ENCODE measurements at regions of chr12 and their contacts with region 1.

Region 1: GRCh38 chr12:93397412-93397811 is 19.7 kb downstream of the NUDT4 start:
- DNase-seq: no peak
- H3K4me3 ChIP-seq: no peak overlapping the region
- H3K4me3 Mint-ChIP-seq: no peak overlapping the region
- H3K27ac ChIP-seq: no peak overlapping the region
- H3K27ac Mint-ChIP-seq: no peak overlapping the region
- H3K4me1 ChIP-seq: no peaks in the 10 kb centered on the region
- H3K4me1 Mint-ChIP-seq: peaks cover 0 to 5% (median 4%) of the 10 kb centered on the region in 3 donors
- H3K27me3 ChIP-seq: no peaks in the 10 kb centered on the region
- H3K27me3 Mint-ChIP-seq: no peaks in the 10 kb centered on the region

Region 2: DNA sequence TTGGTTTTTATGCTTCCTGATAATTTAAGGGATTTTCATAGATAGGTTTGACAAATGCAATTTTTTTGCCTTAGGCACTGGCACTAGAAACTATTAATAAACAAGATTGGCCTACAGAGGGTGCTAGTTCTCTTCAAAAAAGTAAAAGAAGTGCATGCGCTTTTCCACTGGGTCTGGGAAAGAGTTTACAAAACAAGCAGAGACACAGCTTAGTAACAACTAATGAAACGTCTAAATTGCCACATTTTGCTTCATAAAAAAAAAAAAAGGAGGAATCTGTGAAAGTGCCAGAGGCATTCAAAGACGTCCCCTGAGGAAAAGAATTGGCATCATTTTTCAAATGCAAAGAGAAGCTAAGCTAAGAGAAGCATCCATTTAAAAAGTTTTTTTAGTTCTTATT is 410.1 kb before region 1 on chr12:
- CTCF ChIA-PET with region 1: interaction called, 28 read pairs
- POLR2A ChIA-PET with region 1: no interaction called
- DNase-seq: peak in 2 of 5 donors; percentile 41 to 51
- H3K4me3 ChIP-seq: no peak overlapping the region
- H3K4me3 Mint-ChIP-seq: peak overlapping the region in 1 of 7 donors; percentile 51
- H3K27ac ChIP-seq: no peak overlapping the region
- H3K27ac Mint-ChIP-seq: peak overlapping the region in 2 of 8 donors; percentile 27 to 82
- H3K4me1 ChIP-seq: peaks cover 8% of the 10 kb centered on the region
- H3K4me1 Mint-ChIP-seq: peaks cover 8 to 11% (median 10%) of the 10 kb centered on the region in 3 donors
- H3K27me3 ChIP-seq: no peaks in the 10 kb centered on the region
- H3K27me3 Mint-ChIP-seq: peaks cover 1 to 13% of the 10 kb centered on the region in 2 donors

Region 3: GRCh38 chr12:93098077-93098476 is 299.3 kb before region 1 on chr12:
- CTCF ChIA-PET with region 1: interaction called, 16 read pairs
- POLR2A ChIA-PET with region 1: no interaction called
- DNase-seq: peak; percentile 42 to 75 (median 49)
- H3K4me3 ChIP-seq: no peak overlapping the region
- H3K4me3 Mint-ChIP-seq: peak overlapping the region in 2 of 7 donors; percentile 0 to 52
- H3K27ac ChIP-seq: no peak overlapping the region
- H3K27ac Mint-ChIP-seq: peak overlapping the region in 1 of 8 donors; percentile 89
- H3K4me1 ChIP-seq: no peaks in the 10 kb centered on the region
- H3K4me1 Mint-ChIP-seq: peaks cover 14 to 28% (median 19%) of the 10 kb centered on the region in 3 donors
- H3K27me3 ChIP-seq: no peaks in the 10 kb centered on the region
- H3K27me3 Mint-ChIP-seq: no peaks in the 10 kb centered on the region

Region 4: GRCh38 chr12:93380480-93381121 is 16.8 kb before region 1 on chr12:
- CTCF ChIA-PET with region 1: interaction called, 15 read pairs
- POLR2A ChIA-PET with region 1: no interaction called
- DNase-seq: no peak
- H3K4me3 ChIP-seq: peak overlapping the region; percentile 78
- H3K4me3 Mint-ChIP-seq: peak overlapping the region; percentile 93 to 100 (median 99)
- H3K27ac ChIP-seq: peak overlapping the region; percentile 93
- H3K27ac Mint-ChIP-seq: peak overlapping the region; percentile 30 to 99 (median 84)
- H3K4me1 ChIP-seq: peaks cover 45% of the 10 kb centered on the region
- H3K4me1 Mint-ChIP-seq: peaks cover 48 to 68% (median 61%) of the 10 kb centered on the region in 3 donors
- H3K27me3 ChIP-seq: no peaks in the 10 kb centered on the region
- H3K27me3 Mint-ChIP-seq: no peaks in the 10 kb centered on the region

Region 5: GRCh38 chr12:93419388-93420034 is 22.1 kb after region 1 on chr12:
- CTCF ChIA-PET with region 1: interaction called, 14 read pairs
- POLR2A ChIA-PET with region 1: no interaction called
- DNase-seq: peak in 2 of 5 donors; percentile 38 to 47
- H3K4me3 ChIP-seq: no peak overlapping the region
- H3K4me3 Mint-ChIP-seq: no peak overlapping the region
- H3K27ac ChIP-seq: no peak overlapping the region
- H3K27ac Mint-ChIP-seq: peak overlapping the region in 5 of 8 donors; percentile 27 to 80 (median 55)
- H3K4me1 ChIP-seq: peaks cover 69% of the 10 kb centered on the region
- H3K4me1 Mint-ChIP-seq: peaks cover 74 to 96% (median 95%) of the 10 kb centered on the region in 3 donors
- H3K27me3 ChIP-seq: no peaks in the 10 kb centered on the region
- H3K27me3 Mint-ChIP-seq: no peaks in the 10 kb centered on the region

Region 6: GRCh38 chr12:93908846-93909567 is 511.6 kb after region 1 on chr12:
- CTCF ChIA-PET with region 1: no interaction called
- POLR2A ChIA-PET with region 1: no interaction called
- DNase-seq: no peak
- H3K4me3 ChIP-seq: no peak overlapping the region
- H3K4me3 Mint-ChIP-seq: no peak overlapping the region
- H3K27ac ChIP-seq: no peak overlapping the region
- H3K27ac Mint-ChIP-seq: no peak overlapping the region
- H3K4me1 ChIP-seq: no peaks in the 10 kb centered on the region
- H3K4me1 Mint-ChIP-seq: no peaks in the 10 kb centered on the region
- H3K27me3 ChIP-seq: no peaks in the 10 kb centered on the region
- H3K27me3 Mint-ChIP-seq: peaks cover 1 to 2% of the 10 kb centered on the region in 2 donors